PC-3 (cell line): ENCODE measurements at regions of chr7 and their contacts with region 1.

Region 1: GRCh38 chr7:36291387-36292316 is 98.0 kb upstream of the ANLN start:
- DNase-seq: peak; percentile 89
- ATAC-seq: peak; percentile 52
- H3K4me3 ChIP-seq: peak overlapping the region; percentile 40; the same call in 1 of the 2 replicates
- H3K27ac ChIP-seq: peak overlapping the region; percentile 92
- H3K4me1 ChIP-seq: peaks cover 55% of the 10 kb centered on the region
- H3K27me3 ChIP-seq: no peaks in the 10 kb centered on the region
- CTCF ChIP-seq: peak; percentile 94

Region 2: DNA sequence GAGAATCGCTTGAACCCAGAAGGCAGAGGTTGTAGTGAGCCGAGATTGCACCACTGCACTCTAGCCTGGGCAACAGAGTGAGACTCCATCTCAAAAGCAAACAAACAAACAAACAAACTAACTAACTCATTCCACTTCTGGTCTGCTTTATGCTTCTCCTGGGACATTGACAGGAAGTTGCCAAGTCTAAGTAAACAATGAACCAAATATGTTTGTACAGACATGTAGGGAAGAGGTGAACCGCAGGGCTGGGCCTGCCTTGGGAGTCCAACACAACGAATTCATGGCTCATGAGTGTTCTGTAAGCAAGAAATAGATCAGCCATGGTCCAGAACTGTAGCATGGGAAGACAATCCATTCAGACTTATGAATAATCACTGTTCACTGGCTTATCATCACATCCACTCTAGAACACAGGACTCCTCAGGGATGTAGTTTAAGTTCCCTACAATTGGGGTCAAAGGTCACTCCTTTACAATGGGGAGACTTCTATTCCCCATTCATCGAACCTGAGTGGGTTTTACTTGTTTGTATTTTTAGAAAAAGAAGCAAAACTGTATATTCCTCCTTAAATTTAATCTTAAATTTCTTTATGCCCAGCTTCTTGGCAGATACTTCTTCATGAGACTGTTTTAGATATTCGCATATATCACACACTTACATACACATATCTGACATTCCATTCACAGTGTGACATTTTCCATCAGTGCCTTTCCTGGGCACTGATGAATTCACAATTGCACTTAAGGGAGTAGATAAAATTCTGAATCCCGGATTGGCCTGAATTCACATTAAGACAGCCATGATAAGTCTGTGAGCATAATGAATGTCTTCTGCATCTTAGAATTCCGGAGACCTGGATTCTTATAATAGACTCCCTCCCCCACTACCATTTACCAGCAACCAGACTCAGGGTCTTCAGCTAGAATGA is 297.7 kb before region 1 on chr7:
- CTCF ChIA-PET with region 1: interaction called, 3 read pairs
- POLR2A ChIA-PET with region 1: no interaction called
- intact Hi-C with region 1: loop called (anchors 1 kb)
- DNase-seq: peak; percentile 94
- ATAC-seq: peak; percentile 75
- H3K4me3 ChIP-seq: no peak overlapping the region
- H3K27ac ChIP-seq: peak overlapping the region; percentile 87
- H3K4me1 ChIP-seq: peaks cover 29% of the 10 kb centered on the region
- H3K27me3 ChIP-seq: no peaks in the 10 kb centered on the region
- CTCF ChIP-seq: no peak

Region 3: DNA sequence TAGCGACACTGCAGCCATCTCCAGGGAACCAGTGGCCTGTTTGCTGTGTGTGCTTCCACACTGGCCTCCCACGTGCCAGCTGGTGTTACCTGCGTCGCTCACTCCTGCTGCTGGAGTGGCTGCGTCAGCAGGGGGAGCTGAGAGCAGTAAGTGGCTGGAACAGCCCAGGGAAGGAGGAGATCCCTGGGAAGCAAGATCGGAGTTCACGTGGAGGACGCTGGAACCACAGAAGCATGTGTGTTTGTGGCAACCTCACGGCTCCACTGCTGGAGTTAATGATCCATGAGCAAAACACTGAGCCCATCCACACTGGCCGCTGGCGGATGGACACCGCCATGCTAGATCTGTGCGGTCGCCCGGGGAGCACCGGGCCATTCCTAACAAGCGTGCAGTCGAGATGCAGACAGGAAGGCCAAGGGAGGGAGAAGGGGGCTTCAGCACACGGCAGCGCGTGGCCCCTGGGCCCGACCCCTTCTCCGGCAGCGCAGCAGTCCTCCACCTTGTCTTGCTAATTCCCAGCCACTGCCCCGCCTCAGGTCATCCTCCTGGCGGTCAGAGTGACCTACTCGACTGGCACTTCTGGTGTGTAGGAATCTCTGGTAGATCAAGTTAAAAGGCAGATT is 207.1 kb before region 1 on chr7:
- CTCF ChIA-PET with region 1: no interaction called
- POLR2A ChIA-PET with region 1: no interaction called
- intact Hi-C with region 1: loop called (anchors 2 kb)
- DNase-seq: peak; percentile 55
- ATAC-seq: peak; percentile 89
- H3K4me3 ChIP-seq: no peak overlapping the region
- H3K27ac ChIP-seq: no peak overlapping the region
- H3K4me1 ChIP-seq: no peaks in the 10 kb centered on the region
- H3K27me3 ChIP-seq: no peaks in the 10 kb centered on the region
- CTCF ChIP-seq: peak; percentile 57

Region 4: GRCh38 chr7:36128448-36129047 is 163.1 kb before region 1 on chr7:
- CTCF ChIA-PET with region 1: interaction called, 3 read pairs
- POLR2A ChIA-PET with region 1: no interaction called
- intact Hi-C with region 1: loop called (anchors 1 kb)
- DNase-seq: peak; percentile 96
- ATAC-seq: peak; percentile 89
- H3K4me3 ChIP-seq: peak overlapping the region; percentile 56
- H3K27ac ChIP-seq: peak overlapping the region; percentile 97
- H3K4me1 ChIP-seq: peaks cover 19% of the 10 kb centered on the region
- H3K27me3 ChIP-seq: no peaks in the 10 kb centered on the region
- CTCF ChIP-seq: peak; percentile 88

Region 5: DNA sequence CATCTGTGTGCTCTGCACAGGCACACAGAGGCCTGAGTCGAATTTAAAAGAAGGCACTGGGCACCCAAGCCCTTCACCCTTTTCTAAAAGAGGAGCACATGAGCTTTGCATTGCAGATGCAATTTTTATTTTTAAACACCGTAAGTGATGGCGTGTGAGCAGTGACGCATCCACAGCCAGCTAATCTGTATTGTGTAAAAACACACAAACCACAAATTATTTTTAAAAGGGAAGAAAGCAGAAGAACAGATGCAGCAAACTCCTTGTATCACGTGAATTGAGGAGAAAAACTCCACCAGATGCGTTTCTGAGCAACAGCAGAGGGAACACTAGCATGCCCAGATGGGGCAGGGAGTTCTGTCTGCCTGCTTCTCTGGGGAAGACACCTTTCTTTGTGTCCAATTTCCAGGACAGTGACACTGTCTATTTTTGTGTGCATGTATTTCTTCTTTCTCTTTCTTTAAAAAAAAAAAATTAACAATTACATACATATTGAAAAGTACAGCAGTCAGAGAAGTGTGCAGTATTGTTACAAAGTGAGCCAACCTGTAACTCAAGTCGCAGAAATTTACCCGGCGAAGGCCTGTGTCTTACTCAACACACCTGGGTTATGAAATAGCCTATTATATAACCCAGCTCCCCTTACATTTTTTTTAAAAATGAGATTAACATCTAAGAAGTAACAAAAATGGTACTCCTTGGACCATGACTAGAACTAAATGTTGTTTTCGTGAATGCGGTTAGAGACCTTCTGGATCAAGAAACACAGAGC is 99.4 kb before region 1 on chr7:
- CTCF ChIA-PET with region 1: interaction called, 3 read pairs
- POLR2A ChIA-PET with region 1: no interaction called
- intact Hi-C with region 1: loop called (anchors 2 kb)
- DNase-seq: no peak
- ATAC-seq: no peak
- H3K4me3 ChIP-seq: no peak overlapping the region
- H3K27ac ChIP-seq: no peak overlapping the region
- H3K4me1 ChIP-seq: peaks cover 22% of the 10 kb centered on the region
- H3K27me3 ChIP-seq: no peaks in the 10 kb centered on the region
- CTCF ChIP-seq: no peak

Region 6: DNA sequence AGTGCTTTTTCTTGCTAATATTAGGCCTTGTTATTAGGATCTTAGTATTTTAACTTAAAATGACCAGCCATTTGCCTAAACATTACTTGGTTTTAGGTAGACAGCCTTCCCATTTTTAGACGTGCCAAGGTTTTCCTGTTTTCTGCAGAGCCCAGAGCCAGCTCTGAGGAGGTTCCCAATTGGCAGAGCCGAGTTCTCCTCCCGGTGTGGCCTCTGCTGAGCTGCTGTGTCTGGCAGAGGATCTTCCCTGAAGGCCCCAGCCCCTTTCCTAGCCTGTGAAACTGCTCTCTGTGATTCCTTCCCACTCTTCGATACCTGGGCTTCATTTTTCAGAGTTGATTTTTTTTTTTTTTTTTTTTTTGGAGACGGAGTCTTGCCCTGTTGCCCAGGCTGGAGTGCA is 47.2 kb before region 1 on chr7:
- CTCF ChIA-PET with region 1: no interaction called
- POLR2A ChIA-PET with region 1: no interaction called
- intact Hi-C with region 1: no loop called
- DNase-seq: no peak
- ATAC-seq: no peak
- H3K4me3 ChIP-seq: no peak overlapping the region
- H3K27ac ChIP-seq: no peak overlapping the region
- H3K4me1 ChIP-seq: no peaks in the 10 kb centered on the region
- H3K27me3 ChIP-seq: no peaks in the 10 kb centered on the region
- CTCF ChIP-seq: no peak

Region 7: GRCh38 chr7:36315309-36316133 is 23.9 kb after region 1 on chr7:
- CTCF ChIA-PET with region 1: interaction called, 6 read pairs
- POLR2A ChIA-PET with region 1: interaction called, 8 read pairs
- intact Hi-C with region 1: loop called (anchors 1 kb)
- DNase-seq: no peak
- ATAC-seq: 0 out of 2 replicates have a peak, but pooled peaks have one; percentile 17
- H3K4me3 ChIP-seq: no peak overlapping the region
- H3K27ac ChIP-seq: no peak overlapping the region
- H3K4me1 ChIP-seq: no peaks in the 10 kb centered on the region
- H3K27me3 ChIP-seq: no peaks in the 10 kb centered on the region
- CTCF ChIP-seq: no peak

Region 8: GRCh38 chr7:36686499-36686898 is 394.8 kb after region 1 on chr7:
- CTCF ChIA-PET with region 1: no interaction called
- POLR2A ChIA-PET with region 1: no interaction called
- intact Hi-C with region 1: no loop called
- DNase-seq: peak; percentile 62
- ATAC-seq: peak; percentile 33; the same call in 1 of the 2 replicates
- H3K4me3 ChIP-seq: no peak overlapping the region
- H3K27ac ChIP-seq: no peak overlapping the region
- H3K4me1 ChIP-seq: peaks cover 9% of the 10 kb centered on the region
- H3K27me3 ChIP-seq: peaks cover 9% of the 10 kb centered on the region
- CTCF ChIP-seq: no peak